ENCODE measurements at regions of chr1 and their contacts with region 1.

Region 1: DNA sequence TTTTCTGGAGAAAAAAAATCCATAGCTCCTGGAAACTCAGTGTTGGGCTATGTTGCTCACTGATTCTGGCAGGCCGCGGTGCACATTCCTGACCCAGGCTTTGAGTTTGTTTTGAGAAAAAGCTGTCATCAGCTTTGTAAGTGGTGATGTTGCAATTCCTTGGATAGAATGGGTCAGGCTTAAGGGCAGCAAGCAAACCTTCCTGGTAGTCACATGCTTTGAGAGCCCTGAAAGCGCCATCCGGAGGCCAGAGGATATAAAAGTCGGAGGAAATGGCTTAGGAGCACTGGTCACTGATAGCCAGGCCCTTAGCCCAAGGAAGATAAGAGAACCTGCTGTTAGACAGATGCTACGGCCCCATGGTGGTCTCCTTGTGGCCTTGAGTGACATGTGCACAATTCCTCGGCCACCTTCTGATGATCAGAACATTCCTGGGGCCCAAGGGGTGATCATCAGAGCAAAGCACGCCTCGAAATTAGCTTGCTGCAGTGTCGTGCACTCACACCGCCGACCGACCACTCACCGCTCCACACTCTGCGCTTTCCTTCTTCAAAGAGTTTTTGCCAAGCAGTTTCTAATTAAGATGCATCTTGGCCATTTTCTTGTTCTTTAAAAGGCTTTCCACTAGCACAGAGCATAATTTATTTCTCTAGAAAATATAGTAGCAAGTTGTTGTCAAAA is 78.6 kb downstream of the MAN1C1 start:
- DNase-seq: peak; percentile 50
- H3K4me3 ChIP-seq: no peak overlapping the region
- H3K27ac ChIP-seq: peak overlapping the region; percentile 31 to 64
- H3K4me1 ChIP-seq: peaks cover 3% of the 10 kb centered on the region
- H3K27me3 ChIP-seq: no peaks in the 10 kb centered on the region
- CTCF ChIP-seq: no peak
- POLR2A ChIP-seq: no peak

Region 2: GRCh38 chr1:25616095-25616986 is 78.9 kb before region 1 on chr1 and contains the start of gene MAN1C1:
- intact Hi-C with region 1: loop called (anchors 2 kb)
- DNase-seq: peak; percentile 78
- H3K4me3 ChIP-seq: peak within 1 kb of the TSS; percentile 80 to 93
- H3K27ac ChIP-seq: peak within 1 kb of the TSS; percentile 79 to 87
- H3K4me1 ChIP-seq: peaks cover 3% of the 10 kb centered on the region
- H3K27me3 ChIP-seq: no peaks in the 10 kb centered on the region
- CTCF ChIP-seq: peak in 3 of 4 experiments; percentile 31 to 69 (median 57)
- POLR2A ChIP-seq: peak; percentile 53
- total RNA-seq, gene MAN1C1: 22.8 to 34.4 TPM

Region 3: GRCh38 chr1:25658791-25659431 is 36.3 kb before region 1 on chr1:
- intact Hi-C with region 1: loop called (anchors 2 kb)
- DNase-seq: peak; percentile 49
- H3K4me3 ChIP-seq: no peak overlapping the region
- H3K27ac ChIP-seq: peak overlapping the region; percentile 50 to 52
- H3K4me1 ChIP-seq: peaks cover 5% of the 10 kb centered on the region
- H3K27me3 ChIP-seq: no peaks in the 10 kb centered on the region
- CTCF ChIP-seq: no peak
- POLR2A ChIP-seq: no peak

Region 4: GRCh38 chr1:25743826-25744581 is 48.8 kb after region 1 on chr1:
- intact Hi-C with region 1: loop called (anchors 2 kb)
- DNase-seq: peak; percentile 73
- H3K4me3 ChIP-seq: no peak overlapping the region
- H3K27ac ChIP-seq: peak overlapping the region; percentile 71 to 82
- H3K4me1 ChIP-seq: peaks cover 20% of the 10 kb centered on the region
- H3K27me3 ChIP-seq: no peaks in the 10 kb centered on the region
- CTCF ChIP-seq: peak in 3 of 4 experiments; percentile 56 to 71 (median 69)
- POLR2A ChIP-seq: no peak

Measured in prostate gland (tissue), 2 donors.